ENCODE measurements at regions of chr17 and their contacts with region 1.

Region 1: DNA sequence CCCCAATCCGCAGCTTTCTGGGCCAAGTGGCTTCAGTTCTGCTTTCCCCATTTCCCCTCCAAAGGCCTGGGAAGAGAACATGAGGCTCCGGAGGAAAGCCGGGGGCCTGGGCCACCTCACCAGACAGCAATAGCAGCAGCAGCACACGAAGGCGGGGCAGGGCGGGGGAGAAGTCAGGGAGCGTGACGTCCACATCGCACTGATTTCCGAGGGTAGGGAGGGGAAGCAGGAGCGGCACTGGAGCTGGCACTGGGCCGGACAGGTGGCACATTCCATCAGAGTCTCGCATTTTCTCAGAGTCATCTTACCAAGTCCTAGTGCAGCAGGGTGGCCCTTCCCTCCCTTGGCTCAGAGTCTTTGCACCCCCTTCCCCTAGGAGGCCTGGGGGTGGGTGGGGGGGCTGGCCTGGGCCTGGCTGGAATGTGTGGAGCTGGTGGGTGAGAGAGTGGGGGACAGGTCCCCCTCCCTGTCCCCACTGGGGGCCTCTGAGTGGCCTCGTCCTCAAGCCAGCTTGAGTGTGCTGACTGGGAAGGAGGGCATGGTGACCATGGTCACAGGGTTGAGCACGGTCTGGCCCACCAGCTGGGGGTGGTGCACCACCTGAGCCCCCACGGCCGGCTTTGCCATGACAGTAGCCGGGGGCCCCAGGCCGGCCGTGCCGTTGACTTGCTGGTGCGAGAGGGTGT is 14.3 kb downstream of the MNT start:
- DNase-seq: no peak
- H3K4me3 Mint-ChIP-seq: no peak overlapping the region
- H3K27ac Mint-ChIP-seq: no peak overlapping the region
- H3K4me1 Mint-ChIP-seq: peaks cover 2% of the 10 kb centered on the region
- H3K27me3 Mint-ChIP-seq: no peaks in the 10 kb centered on the region
- CTCF ChIP-seq: no peak

Region 2: DNA sequence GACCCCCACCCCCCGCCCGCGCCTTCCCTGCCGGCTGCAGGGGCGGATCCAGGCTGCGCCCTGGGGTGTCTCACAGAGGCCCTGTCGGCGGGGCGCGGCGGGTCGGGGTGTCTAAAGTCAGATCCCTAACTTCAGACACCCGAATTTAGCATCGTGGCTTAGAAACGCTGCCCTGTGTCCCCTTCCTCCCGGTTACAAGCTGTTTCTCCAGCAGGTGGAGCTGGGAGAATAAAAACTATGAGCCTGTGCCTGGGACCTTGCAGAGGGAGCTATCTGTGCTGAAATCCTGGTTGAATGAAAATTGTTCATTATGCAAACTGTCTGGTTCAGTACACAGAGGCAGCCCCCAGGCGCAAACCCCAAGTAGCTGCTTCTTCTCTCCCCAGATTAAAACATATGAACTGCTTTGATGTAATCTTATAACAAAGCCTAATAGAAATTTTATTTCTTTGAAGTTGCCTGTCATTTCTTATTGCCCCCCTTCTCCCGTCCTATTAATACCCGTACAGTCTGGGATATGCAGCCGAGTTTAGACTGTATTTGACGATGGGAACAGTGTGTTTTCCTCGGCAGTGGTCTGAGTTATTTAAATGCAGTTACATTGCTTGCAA is 477.7 kb before region 1 on chr17:
- CTCF ChIA-PET with region 1: no interaction called
- POLR2A ChIA-PET with region 1: no interaction called
- intact Hi-C with region 1: no loop called
- DNase-seq: peak; percentile 81
- H3K4me3 Mint-ChIP-seq: no peak overlapping the region
- H3K27ac Mint-ChIP-seq: no peak overlapping the region
- H3K4me1 Mint-ChIP-seq: no peaks in the 10 kb centered on the region
- H3K27me3 Mint-ChIP-seq: peaks cover 26% of the 10 kb centered on the region
- CTCF ChIP-seq: peak; percentile 73

Region 3: DNA sequence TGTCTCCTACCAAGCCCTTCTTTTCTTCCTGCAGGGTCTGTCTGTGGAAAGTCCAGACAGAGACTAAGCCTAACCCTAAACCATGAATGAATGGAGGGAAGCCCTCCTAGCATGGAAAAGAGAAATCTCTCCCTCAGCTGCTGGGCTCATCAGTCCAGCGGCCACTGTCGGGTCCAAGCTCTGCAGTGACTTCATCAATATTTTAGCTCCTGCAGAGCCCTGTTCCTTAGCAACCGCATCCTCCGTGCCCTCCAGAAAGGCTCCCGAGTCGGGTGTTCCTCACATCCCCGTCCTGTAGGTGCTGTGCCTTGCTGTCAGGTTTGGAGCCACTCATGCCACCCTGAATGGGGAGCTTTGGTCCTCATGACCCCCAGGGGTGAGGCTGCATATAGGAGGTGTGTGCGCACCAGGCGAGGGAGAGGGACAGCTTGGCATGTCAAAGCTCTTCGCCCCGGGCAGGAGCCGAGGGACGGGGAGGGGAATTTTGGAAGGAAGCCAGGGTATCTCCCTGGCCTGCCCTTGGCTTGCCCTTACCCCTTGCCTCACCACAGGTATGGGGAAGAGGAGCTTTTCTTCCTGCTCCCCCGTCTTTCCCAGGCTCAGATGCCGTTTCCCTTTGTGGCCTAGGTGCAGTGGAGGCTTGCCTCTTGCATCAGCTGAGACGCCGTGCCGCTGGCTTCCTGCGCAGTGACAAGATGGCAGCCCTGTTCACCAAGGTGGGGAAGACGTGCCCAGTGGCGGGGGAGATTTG is 25.4 kb before region 1 on chr17:
- CTCF ChIA-PET with region 1: interaction called, 22 read pairs
- POLR2A ChIA-PET with region 1: interaction called, 10 read pairs
- intact Hi-C with region 1: no loop called
- DNase-seq: no peak
- H3K4me3 Mint-ChIP-seq: no peak overlapping the region
- H3K27ac Mint-ChIP-seq: peak overlapping the region; percentile 84
- H3K4me1 Mint-ChIP-seq: peaks cover 17% of the 10 kb centered on the region
- H3K27me3 Mint-ChIP-seq: no peaks in the 10 kb centered on the region
- CTCF ChIP-seq: no peak

Region 4: GRCh38 chr17:2401426-2402221 is 15.1 kb after region 1 on chr17:
- CTCF ChIA-PET with region 1: interaction called, 309 read pairs
- POLR2A ChIA-PET with region 1: interaction called, 77 read pairs
- intact Hi-C with region 1: no loop called
- DNase-seq: peak; percentile 99
- H3K4me3 Mint-ChIP-seq: peak overlapping the region; percentile 87
- H3K27ac Mint-ChIP-seq: peak overlapping the region; percentile 99
- H3K4me1 Mint-ChIP-seq: peaks cover 49% of the 10 kb centered on the region
- H3K27me3 Mint-ChIP-seq: no peaks in the 10 kb centered on the region
- CTCF ChIP-seq: no peak

Region 5: GRCh38 chr17:2406903-2407790 is 20.6 kb after region 1 on chr17:
- CTCF ChIA-PET with region 1: interaction called, 309 read pairs
- POLR2A ChIA-PET with region 1: interaction called, 77 read pairs
- intact Hi-C with region 1: no loop called
- DNase-seq: peak; percentile 86
- H3K4me3 Mint-ChIP-seq: peak overlapping the region; percentile 65
- H3K27ac Mint-ChIP-seq: peak overlapping the region; percentile 98
- H3K4me1 Mint-ChIP-seq: peaks cover 36% of the 10 kb centered on the region
- H3K27me3 Mint-ChIP-seq: no peaks in the 10 kb centered on the region
- CTCF ChIP-seq: no peak

Region 6: DNA sequence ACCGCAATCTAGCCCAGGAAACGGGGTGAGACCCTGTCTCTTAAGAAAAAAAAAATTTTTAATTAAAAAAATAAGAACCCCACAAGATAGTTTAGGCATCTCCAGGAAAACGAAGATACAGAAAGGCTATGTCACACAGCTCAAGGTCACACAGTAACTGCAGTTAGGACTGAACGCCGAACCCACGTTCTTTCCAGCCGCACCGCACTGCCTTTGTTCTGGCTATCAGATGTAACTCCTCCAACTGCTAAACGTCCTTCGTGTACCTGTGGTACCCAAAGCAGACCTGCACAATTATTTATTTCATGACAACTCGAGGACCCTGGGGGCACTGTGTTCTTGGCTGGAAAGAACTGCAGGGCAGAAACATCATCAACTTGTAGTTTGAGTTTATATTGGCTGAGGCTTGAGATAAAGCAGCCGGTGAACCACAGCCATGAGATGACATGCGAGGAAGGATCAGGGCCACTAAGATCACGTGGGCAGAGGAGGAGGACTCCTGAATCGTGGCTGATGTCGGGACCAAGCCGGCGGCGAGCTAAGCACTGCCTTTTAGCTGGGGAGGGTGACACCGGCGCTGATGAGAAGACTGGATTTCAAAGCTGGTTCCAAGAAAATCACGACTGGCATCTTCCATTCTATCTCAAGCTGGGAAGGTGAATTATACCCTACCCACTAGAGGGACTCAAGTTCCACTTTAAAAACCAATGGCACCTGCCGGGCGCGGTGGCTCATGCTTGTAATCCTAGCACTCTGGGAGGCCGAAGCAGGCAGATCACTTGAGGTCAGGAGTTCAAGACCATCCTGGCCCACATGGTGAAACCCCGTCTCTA is 35.0 kb after region 1 on chr17:
- CTCF ChIA-PET with region 1: interaction called, 309 read pairs
- POLR2A ChIA-PET with region 1: interaction called, 61 read pairs
- intact Hi-C with region 1: loop called (anchors 1 kb)
- DNase-seq: no peak
- H3K4me3 Mint-ChIP-seq: no peak overlapping the region
- H3K27ac Mint-ChIP-seq: no peak overlapping the region
- H3K4me1 Mint-ChIP-seq: peaks cover 9% of the 10 kb centered on the region
- H3K27me3 Mint-ChIP-seq: no peaks in the 10 kb centered on the region
- CTCF ChIP-seq: no peak

Region 7: DNA sequence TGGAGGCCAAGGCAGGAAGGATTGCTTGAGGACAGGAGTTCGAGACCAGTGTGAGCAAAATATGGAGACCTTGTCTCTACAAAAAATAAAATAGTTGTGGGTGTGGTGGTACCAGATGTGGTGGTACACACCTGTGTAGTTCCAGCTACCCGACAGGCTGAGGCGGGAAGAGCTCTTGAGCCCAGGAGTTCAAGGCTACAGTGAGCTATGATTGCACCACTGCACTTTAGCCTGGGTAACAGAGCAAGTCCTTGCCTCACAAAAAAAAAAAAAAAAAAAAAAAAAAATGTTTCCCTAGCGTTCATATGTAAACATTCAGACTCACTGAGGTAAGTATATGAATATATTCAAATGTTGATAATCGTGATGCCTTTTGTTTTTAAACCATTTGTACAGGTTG is 285.5 kb after region 1 on chr17:
- CTCF ChIA-PET with region 1: interaction called, 9 read pairs
- POLR2A ChIA-PET with region 1: no interaction called
- intact Hi-C with region 1: loop called (anchors 1 kb)
- DNase-seq: no peak
- H3K4me3 Mint-ChIP-seq: no peak overlapping the region
- H3K27ac Mint-ChIP-seq: no peak overlapping the region
- H3K4me1 Mint-ChIP-seq: peaks cover 5% of the 10 kb centered on the region
- H3K27me3 Mint-ChIP-seq: no peaks in the 10 kb centered on the region
- CTCF ChIP-seq: no peak

Region 8: DNA sequence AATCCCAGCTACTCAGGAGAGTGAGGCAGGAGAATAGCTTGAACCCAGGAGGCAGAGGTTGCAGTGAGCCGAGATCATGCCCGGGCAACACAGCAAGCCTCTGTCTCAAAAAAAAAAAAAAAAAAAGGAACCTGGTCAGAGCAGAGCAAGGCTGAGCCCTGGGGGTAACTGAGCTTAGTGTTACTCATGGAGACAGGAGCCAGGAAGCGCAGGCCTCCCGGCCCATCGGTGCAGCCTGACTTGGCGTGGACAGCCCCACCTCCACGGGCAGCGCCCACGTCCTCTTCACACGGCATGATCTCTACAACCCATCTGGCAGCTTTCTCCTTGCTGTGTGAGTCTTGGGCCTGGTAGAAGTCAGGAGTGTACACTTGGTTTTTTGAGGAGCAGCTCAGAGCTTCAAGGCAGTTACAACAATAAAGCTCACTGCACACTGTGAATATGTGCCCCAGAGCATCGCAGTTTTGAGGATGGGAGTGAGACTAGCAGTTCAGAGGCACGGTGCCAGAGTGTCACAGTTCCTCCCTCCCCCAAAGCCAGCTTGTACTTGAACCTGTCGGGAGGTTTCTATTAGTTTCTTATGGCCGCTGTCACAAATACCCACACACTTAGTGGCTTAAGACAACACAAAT is 539.6 kb after region 1 on chr17:
- CTCF ChIA-PET with region 1: no interaction called
- POLR2A ChIA-PET with region 1: no interaction called
- intact Hi-C with region 1: no loop called
- DNase-seq: peak; percentile 88
- H3K4me3 Mint-ChIP-seq: peak overlapping the region; percentile 6
- H3K27ac Mint-ChIP-seq: peak overlapping the region; percentile 97
- H3K4me1 Mint-ChIP-seq: peaks cover 26% of the 10 kb centered on the region
- H3K27me3 Mint-ChIP-seq: no peaks in the 10 kb centered on the region
- CTCF ChIP-seq: no peak

Measured in MCF 10A (cell line).